PC-9 (cell line): ENCODE measurements at regions of chr17 and their contacts with region 1.

Region 1: DNA sequence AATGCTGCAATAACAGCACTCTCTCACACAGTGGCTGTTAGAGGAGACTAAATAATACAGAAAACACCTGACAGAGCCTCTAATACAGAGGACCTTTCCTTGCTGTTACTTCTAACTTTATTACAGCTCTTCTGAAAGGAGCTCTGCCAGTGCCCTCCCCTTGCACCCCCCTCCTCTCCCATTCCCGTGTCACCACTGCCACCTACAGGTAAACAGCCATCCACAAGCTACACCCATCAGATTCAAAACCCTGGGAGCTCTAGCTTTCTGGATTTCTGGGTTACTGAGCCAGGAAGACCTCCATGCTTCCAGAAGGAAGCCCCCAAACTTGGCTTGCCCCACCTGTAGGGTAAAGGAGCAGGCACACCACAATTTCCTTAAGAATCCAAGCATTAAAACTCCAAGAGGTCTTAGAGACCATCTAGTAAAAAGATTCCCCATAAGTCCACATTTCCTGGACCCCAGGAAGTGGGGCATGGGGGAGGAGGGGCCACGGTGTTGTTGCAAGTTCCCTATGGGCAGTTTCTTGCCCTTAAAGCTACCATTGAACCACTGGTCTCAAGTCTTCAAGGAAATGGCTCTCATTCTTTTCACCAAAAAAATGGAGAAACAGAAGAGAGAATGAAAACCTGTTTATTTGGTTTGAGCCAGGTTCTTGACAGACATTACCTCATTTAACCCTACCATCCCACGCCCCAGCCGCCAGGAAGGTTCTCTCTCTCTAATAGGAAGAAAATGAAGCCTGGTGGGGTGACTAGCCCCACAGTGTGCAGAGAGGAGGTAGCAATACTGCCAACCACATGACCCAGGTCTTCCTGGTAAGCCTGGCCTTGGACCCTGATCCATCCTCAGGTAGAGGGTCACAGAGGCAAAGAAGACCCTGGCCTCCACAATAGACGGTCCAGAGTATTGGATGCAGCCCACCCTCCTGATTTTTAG is 52.8 kb downstream of the TOM1L2 start:
- DNase-seq: peak; percentile 62 to 78
- H3K4me3 ChIP-seq: no peak overlapping the region
- H3K27ac ChIP-seq: peak overlapping the region; percentile 24; the same call in 1 of the 2 replicates
- H3K4me1 ChIP-seq: peaks cover 64% of the 10 kb centered on the region
- H3K27me3 ChIP-seq: no peaks in the 10 kb centered on the region
- CTCF ChIP-seq: peak; percentile 90

Region 2: DNA sequence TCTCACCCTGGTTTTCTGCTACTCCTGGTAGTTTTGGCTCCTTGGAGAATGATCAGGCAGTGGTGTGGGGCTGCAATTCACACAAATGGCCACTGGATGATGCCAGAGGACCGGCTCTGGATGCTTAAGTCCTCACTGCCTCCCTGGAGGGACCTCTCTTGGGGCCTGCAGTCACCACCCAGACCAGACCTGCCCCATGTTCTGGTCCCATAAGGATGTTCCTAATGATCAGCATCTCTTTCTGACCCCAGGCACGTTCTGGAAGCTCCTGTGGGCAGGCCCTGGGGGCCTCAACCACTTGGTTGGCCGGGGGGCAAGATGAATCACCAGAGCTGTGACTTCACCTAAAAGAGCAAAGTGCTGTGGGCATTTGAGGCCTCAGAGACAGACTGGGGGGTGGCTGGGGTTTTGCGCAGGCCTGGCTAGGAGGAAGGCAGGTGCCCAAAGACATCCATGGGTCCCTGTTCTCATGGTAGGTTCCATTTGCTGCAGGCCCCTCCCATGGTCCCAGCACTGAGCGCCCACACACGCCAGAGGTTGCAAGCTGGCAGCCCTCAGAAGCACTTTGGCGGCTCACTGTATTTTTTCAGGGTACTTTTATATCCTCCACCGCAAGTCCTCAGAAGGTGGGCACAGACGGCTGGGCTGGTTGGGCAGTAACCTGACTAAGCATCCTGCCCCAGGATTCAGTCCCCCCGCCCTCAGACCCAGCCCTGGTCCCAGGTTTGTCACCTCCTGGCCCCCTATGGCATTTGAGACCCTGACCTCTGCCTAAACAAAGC is 563.1 kb before region 1 on chr17:
- CTCF ChIA-PET with region 1: interaction called, 3 read pairs
- POLR2A ChIA-PET with region 1: no interaction called
- intact Hi-C with region 1: loop called (anchors 1 kb)
- DNase-seq: peak; percentile 65 to 82
- H3K4me3 ChIP-seq: no peak overlapping the region
- H3K27ac ChIP-seq: no peak overlapping the region
- H3K4me1 ChIP-seq: no peaks in the 10 kb centered on the region
- H3K27me3 ChIP-seq: peaks cover 22% of the 10 kb centered on the region
- CTCF ChIP-seq: peak; percentile 100

Region 3: GRCh38 chr17:17681187-17681848 is 238.1 kb before region 1 on chr17 and contains the start of gene RAI1:
- CTCF ChIA-PET with region 1: interaction called, 6 read pairs
- POLR2A ChIA-PET with region 1: no interaction called
- intact Hi-C with region 1: loop called (anchors 1 kb)
- DNase-seq: peak; percentile 65 to 85
- H3K4me3 ChIP-seq: peak within 1 kb of the TSS; percentile 73
- H3K27ac ChIP-seq: peak within 1 kb of the TSS; percentile 64
- H3K4me1 ChIP-seq: peaks cover 48% of the 10 kb centered on the region
- H3K27me3 ChIP-seq: no peaks in the 10 kb centered on the region
- CTCF ChIP-seq: no peak; the same call in 1 of the 2 replicates
- total RNA-seq, gene RAI1: 86.3 and 92.9 TPM in 2 replicates

Region 4: DNA sequence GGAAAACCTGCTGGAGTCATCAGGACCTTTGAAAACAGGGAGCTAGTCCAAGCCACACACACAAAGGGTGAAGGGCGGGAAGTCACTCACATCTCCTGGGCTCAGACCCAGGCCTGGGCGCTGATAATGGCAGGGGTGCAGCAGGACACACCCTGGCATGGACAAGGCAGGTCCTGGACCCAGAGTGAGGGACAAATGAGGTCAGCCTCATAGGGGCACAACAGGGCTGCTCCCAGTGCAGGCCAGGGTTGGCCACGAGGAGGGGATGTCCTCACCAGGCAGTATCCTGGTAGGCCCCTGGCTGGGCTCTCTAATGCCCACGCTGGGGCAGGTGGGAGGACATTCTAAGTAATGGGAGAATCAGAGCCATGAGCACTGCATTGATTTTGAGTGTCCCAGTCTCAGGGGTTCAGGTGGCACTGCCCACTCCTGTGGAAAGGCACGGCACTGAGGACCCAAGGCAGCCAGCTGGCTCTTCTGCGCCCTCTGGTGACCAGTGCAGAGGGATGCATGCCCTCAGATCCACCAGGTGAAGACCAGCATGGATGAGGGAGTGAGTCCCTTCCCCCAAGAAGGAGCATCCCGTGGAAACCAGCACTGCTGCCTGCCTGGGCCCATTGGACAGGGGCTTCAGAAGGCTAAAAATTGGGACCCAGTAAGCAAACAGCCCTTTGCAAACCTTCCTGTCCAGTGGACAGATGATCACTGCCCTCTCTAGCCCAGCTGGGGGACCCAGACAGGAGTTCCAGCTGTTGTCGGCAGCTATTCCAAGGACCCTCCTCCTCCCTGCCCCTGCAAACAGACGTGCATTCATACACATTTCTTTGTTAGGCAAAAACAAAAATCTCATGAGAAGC is 59.3 kb before region 1 on chr17:
- CTCF ChIA-PET with region 1: interaction called, 4 read pairs
- POLR2A ChIA-PET with region 1: interaction called, 10 read pairs
- intact Hi-C with region 1: loop called (anchors 2 kb)
- DNase-seq: peak in 1 of 2 experiments; percentile 72
- H3K4me3 ChIP-seq: no peak overlapping the region
- H3K27ac ChIP-seq: no peak overlapping the region
- H3K4me1 ChIP-seq: peaks cover 19% of the 10 kb centered on the region
- H3K27me3 ChIP-seq: no peaks in the 10 kb centered on the region
- CTCF ChIP-seq: peak; percentile 98

Region 5: GRCh38 chr17:17890773-17891759 is 28.4 kb before region 1 on chr17:
- CTCF ChIA-PET with region 1: interaction called, 14 read pairs
- POLR2A ChIA-PET with region 1: no interaction called
- intact Hi-C with region 1: loop called (anchors 1 kb)
- DNase-seq: peak; percentile 57 to 71
- H3K4me3 ChIP-seq: no peak overlapping the region
- H3K27ac ChIP-seq: no peak overlapping the region
- H3K4me1 ChIP-seq: no peaks in the 10 kb centered on the region
- H3K27me3 ChIP-seq: no peaks in the 10 kb centered on the region
- CTCF ChIP-seq: peak; percentile 93

Region 6: GRCh38 chr17:17959520-17960361 is 40.3 kb after region 1 on chr17:
- CTCF ChIA-PET with region 1: interaction called, 23 read pairs
- POLR2A ChIA-PET with region 1: interaction called, 7 read pairs
- intact Hi-C with region 1: loop called (anchors 2 kb)
- DNase-seq: no peak
- H3K4me3 ChIP-seq: no peak overlapping the region
- H3K27ac ChIP-seq: peak overlapping the region; percentile 90
- H3K4me1 ChIP-seq: peaks cover 54% of the 10 kb centered on the region
- H3K27me3 ChIP-seq: no peaks in the 10 kb centered on the region
- CTCF ChIP-seq: no peak

Region 7: GRCh38 chr17:18033442-18034099 is 114.1 kb after region 1 on chr17:
- CTCF ChIA-PET with region 1: interaction called, 4 read pairs
- POLR2A ChIA-PET with region 1: interaction called, 3 read pairs
- intact Hi-C with region 1: loop called (anchors 1 kb)
- DNase-seq: peak; percentile 54 to 82
- H3K4me3 ChIP-seq: no peak overlapping the region
- H3K27ac ChIP-seq: no peak overlapping the region
- H3K4me1 ChIP-seq: peaks cover 30% of the 10 kb centered on the region
- H3K27me3 ChIP-seq: no peaks in the 10 kb centered on the region
- CTCF ChIP-seq: peak; percentile 89